Posterior vena cava (tissue), 2 donors: ENCODE measurements at regions of chr12 and their contacts with region 1.

Region 1: GRCh38 chr12:122021822-122022526 is at the start of gene BCL7A:
- DNase-seq: peak; percentile 88
- total RNA-seq, gene BCL7A: 3.3 to 7.6 TPM

Region 2: DNA sequence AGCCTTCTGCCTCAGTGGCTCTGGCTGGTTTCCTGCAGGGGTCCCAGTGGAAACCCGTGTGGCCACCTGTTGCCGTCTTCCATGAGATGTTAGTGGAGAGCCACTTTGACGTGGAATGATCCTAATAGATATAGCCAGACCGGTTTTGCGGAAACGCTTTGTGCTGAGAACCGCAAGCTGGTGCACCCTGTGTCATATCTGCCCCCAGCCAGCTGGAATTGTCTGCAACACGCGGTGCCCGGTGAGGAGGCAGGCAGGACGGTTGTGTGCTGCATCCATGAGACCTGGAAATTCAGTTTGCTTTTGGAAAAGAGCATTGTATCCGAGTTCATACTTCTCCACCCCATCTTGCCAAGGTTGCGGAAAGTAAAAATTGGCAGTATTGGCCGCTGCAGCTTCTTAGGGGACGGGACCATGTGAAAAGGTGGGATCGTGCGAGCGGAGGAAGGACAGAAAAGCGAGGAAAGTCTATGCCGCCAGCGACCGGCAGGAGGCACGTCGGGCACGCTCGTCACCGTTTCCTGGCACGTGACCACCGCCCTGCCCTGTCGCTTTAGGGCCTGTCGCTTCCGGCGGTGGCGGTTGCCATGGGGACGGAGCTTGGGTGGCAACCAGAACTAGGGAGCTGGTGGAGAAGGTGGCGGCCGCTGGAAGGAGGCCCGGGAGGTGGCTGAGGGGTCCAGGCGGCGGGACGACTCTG is 103.8 kb before region 1 on chr12 and contains the start of gene CFAP251:
- intact Hi-C with region 1: loop called in 1 of 2 experiments (anchors 5 kb)
- DNase-seq: peak; percentile 98
- total RNA-seq, gene CFAP251: 0.65 to 1.9 TPM

Region 3: DNA sequence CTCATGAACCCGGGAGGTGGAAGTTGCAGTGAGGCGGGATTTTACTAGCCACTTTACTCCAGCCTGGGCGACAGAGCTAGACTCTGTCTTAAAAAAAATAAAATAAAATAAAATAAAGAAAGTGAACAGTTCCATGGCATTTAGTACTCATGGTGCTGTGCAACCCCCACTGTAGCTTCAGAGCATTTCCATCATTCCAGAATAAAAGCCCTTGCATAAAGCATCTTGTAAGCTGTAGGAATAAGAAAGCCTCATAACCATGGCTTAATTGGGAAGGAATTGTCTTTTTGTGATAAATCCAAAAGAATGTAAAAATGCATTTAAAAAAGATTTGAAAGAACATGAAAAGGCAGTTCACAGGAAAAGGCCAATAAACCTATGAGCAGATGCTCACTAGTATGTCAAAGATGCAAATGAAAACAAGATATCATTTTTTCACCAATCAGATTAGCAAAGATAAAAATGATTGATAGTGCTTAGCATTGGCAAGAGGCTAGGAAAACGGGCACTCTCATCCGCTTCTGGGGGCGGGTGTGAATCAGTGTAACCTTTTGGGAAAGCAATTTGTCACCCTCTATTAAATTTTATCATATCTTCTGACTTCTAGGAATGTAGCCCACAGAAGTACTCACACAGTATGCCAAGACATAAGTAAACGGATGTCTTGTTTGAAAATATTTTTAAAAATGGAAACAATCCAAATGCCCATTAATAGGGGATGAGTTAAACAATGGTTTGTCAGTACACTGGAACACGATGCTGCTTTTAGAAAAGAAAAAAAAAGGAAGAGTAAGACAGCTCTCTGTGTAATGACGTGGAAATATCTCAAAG is 56.9 kb before region 1 on chr12:
- intact Hi-C with region 1: no loop called
- DNase-seq: no peak